A673 (cell line): ENCODE measurements at regions of chr4 and their contacts with region 1.

Region 1: DNA sequence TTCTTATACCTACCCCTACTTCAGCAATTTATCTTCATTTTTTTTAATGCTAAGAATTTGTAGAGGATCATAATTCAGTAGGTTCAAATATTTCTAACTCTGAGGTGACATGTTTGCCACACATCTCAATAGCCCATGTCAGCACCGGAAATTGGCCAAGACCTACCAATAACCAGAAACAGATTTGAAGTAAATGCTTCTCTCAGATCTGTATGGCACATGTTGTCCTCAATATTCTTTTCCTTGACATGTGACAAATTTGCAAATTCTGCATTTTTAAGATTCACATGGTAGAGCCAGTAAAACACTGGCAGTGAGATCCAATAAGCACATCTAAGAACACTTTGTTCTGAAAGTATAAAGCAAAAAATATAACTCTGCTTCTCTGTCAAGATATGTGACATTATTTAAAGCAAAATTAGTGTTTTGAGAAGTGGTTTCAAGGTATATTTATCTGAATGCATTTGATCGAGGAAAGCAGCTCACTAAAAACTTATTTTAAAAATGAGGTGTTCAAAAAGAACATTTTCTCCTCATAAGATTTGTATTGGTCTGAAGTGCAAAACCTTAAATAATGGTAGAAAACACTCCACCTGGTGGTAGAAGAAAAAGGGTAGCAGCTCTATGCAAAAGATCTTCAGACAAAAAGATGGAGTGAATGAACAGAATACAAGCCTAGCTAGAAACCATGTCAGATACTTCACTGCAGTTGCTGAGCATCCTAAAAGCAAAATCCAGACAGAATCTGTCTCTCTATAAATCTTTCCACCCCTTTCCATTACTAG is 513.8 kb upstream of the FAM241A start:
- DNase-seq: peak; percentile 61
- H3K4me3 ChIP-seq: no peak overlapping the region
- H3K27ac ChIP-seq: no peak overlapping the region
- H3K4me1 ChIP-seq: peaks cover 32% of the 10 kb centered on the region
- H3K27me3 ChIP-seq: no peaks in the 10 kb centered on the region
- CTCF ChIP-seq: peak; percentile 64

Region 2: GRCh38 chr4:110970642-110971041 is 660.8 kb before region 1 on chr4:
- CTCF ChIA-PET with region 1: no interaction called
- POLR2A ChIA-PET with region 1: no interaction called
- intact Hi-C with region 1: loop called (anchors 2 kb)
- DNase-seq: peak; percentile 79
- H3K4me3 ChIP-seq: no peak overlapping the region
- H3K27ac ChIP-seq: no peak overlapping the region
- H3K4me1 ChIP-seq: no peaks in the 10 kb centered on the region
- H3K27me3 ChIP-seq: no peaks in the 10 kb centered on the region
- CTCF ChIP-seq: peak; percentile 78

Region 3: GRCh38 chr4:111136438-111136837 is 495.0 kb before region 1 on chr4:
- CTCF ChIA-PET with region 1: interaction called, 14 read pairs
- POLR2A ChIA-PET with region 1: no interaction called
- intact Hi-C with region 1: loop called (anchors 1 kb)
- DNase-seq: peak; percentile 45
- H3K4me3 ChIP-seq: no peak overlapping the region
- H3K27ac ChIP-seq: no peak overlapping the region
- H3K4me1 ChIP-seq: no peaks in the 10 kb centered on the region
- H3K27me3 ChIP-seq: no peaks in the 10 kb centered on the region
- CTCF ChIP-seq: peak; percentile 45

Region 4: DNA sequence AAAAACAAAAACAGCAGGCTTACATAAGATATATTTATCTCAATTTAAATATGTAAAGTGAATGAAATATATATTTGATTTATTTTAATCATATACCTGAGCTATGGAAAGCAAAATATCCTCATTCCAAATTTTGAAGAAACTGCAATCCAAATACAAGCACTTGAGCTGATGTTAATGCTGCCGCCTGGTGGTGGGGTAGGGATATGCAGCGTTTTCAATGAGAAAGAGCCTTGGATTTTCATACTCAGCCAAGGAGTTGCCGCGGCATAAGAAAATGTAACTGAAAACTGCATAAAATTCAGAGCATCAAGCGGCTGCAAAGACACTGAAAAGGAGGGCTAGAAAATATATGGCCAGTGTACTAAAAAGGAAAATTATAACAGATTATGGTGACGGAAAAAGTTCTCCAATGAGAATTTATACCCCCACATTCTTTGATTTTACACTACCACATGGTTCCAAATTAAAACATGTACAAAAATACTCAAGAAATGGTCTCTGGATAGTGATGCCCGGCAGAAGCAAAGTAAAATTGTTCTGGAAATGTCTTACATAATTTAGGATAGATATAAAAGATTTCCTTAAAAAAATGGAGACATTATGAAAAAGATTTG is 348.2 kb before region 1 on chr4:
- CTCF ChIA-PET with region 1: no interaction called
- POLR2A ChIA-PET with region 1: no interaction called
- intact Hi-C with region 1: loop called (anchors 2 kb)
- DNase-seq: peak; percentile 67
- H3K4me3 ChIP-seq: no peak overlapping the region
- H3K27ac ChIP-seq: no peak overlapping the region
- H3K4me1 ChIP-seq: no peaks in the 10 kb centered on the region
- H3K27me3 ChIP-seq: no peaks in the 10 kb centered on the region
- CTCF ChIP-seq: peak; percentile 88

Region 5: GRCh38 chr4:112266821-112267220 is 635.4 kb after region 1 on chr4:
- CTCF ChIA-PET with region 1: no interaction called
- POLR2A ChIA-PET with region 1: no interaction called
- intact Hi-C with region 1: no loop called
- DNase-seq: peak; percentile 28
- H3K4me3 ChIP-seq: no peak overlapping the region
- H3K27ac ChIP-seq: no peak overlapping the region
- H3K4me1 ChIP-seq: no peaks in the 10 kb centered on the region
- H3K27me3 ChIP-seq: no peaks in the 10 kb centered on the region
- CTCF ChIP-seq: peak; percentile 62